CD14-positive monocyte (primary cell): ENCODE measurements at regions of chr11 and their contacts with region 1.

Region 1: GRCh38 chr11:2480874-2481220 is 36.0 kb downstream of the KCNQ1 start:
- DNase-seq: peak; percentile 85 to 95 (median 87)
- H3K4me3 ChIP-seq: peak overlapping the region; percentile 2 to 71 (median 34)
- H3K4me3 Mint-ChIP-seq: peak overlapping the region; percentile 11 to 80
- H3K27ac ChIP-seq: peak overlapping the region; percentile 88 to 94
- H3K27ac Mint-ChIP-seq: peak overlapping the region; percentile 90 to 99 (median 98)
- H3K4me1 ChIP-seq: peaks cover 44 to 46% of the 10 kb centered on the region in 2 donors
- H3K4me1 Mint-ChIP-seq: peaks cover 56% of the 10 kb centered on the region
- H3K27me3 ChIP-seq: no peaks in the 10 kb centered on the region
- H3K27me3 Mint-ChIP-seq: peaks cover 0 to 6% (median 5%) of the 10 kb centered on the region in 3 donors
- CTCF ChIP-seq: no peak

Region 2: GRCh38 chr11:2444821-2445745 is 35.8 kb before region 1 on chr11 and contains the start of gene KCNQ1:
- intact Hi-C with region 1: loop called in 1 of 2 experiments (anchors 5 kb)
- DNase-seq: peak; percentile 49 to 73 (median 60)
- H3K4me3 ChIP-seq: peak within 1 kb of the TSS; percentile 74 to 88 (median 82)
- H3K4me3 Mint-ChIP-seq: peak within 1 kb of the TSS; percentile 93 to 98
- H3K27ac ChIP-seq: peak within 1 kb of the TSS; percentile 80 to 88
- H3K27ac Mint-ChIP-seq: peak within 1 kb of the TSS; percentile 74 to 89 (median 86)
- H3K4me1 ChIP-seq: peaks cover 49 to 57% of the 10 kb centered on the region in 2 donors
- H3K4me1 Mint-ChIP-seq: peaks cover 43% of the 10 kb centered on the region
- H3K27me3 ChIP-seq: peaks cover 0 to 19% of the 10 kb centered on the region in 2 donors
- H3K27me3 Mint-ChIP-seq: peaks cover 13 to 25% (median 16%) of the 10 kb centered on the region in 3 donors
- CTCF ChIP-seq: no peak
- polyA plus RNA-seq, gene KCNQ1: 14.9 to 31.8 (median 21.6) TPM

Region 3: DNA sequence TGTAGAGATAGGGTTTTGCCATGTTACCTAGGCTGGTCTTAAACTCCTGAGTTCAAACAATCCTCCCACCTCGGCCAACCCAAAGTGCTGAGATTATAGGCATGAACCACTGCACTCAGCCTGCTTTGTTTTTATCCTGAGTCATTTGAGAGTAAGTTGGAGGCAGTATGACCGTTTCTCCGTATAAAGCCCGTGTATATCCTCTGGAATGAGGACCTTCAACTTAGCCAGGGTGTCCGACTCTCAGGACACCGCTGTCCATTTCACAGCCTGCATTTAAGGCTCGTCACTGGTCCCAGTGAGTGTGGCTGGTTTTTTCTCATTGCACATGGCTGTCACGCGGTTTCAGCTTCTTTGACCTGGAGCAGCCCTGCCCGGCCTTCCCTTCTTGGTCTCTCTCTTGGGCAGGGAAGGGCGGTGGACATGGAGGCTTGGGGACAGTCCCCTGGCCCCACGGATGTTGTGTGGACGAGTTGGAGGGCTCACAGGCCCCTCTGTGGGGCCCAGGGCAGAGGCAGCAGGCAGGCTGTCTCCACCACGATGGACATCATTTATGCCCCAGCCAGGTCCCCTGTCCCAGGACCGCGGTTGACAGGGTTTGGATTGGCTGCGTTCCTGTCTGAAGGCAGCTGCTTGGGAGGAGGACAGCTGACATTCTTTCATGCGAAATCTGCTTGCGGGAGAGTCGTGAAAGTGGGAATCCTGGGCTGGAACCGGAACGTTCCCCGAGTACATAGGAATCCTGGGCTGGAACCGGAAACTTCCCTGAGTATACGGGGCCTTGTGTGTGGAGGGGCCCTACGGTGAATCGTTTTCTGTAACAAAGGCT is 57.3 kb after region 1 on chr11:
- intact Hi-C with region 1: no loop called
- DNase-seq: no peak
- H3K4me3 ChIP-seq: no peak overlapping the region
- H3K4me3 Mint-ChIP-seq: no peak overlapping the region
- H3K27ac ChIP-seq: no peak overlapping the region
- H3K27ac Mint-ChIP-seq: no peak overlapping the region
- H3K4me1 ChIP-seq: peaks cover 23 to 30% of the 10 kb centered on the region in 2 donors
- H3K4me1 Mint-ChIP-seq: peaks cover 24% of the 10 kb centered on the region
- H3K27me3 ChIP-seq: no peaks in the 10 kb centered on the region
- H3K27me3 Mint-ChIP-seq: peaks cover 5 to 13% (median 7%) of the 10 kb centered on the region in 3 donors
- CTCF ChIP-seq: no peak

Region 4: GRCh38 chr11:2586087-2586792 is 105.4 kb after region 1 on chr11:
- intact Hi-C with region 1: no loop called
- DNase-seq: peak in 1 of 3 donors; percentile 1
- H3K4me3 ChIP-seq: no peak overlapping the region
- H3K4me3 Mint-ChIP-seq: no peak overlapping the region
- H3K27ac ChIP-seq: no peak overlapping the region
- H3K27ac Mint-ChIP-seq: no peak overlapping the region
- H3K4me1 ChIP-seq: no peaks in the 10 kb centered on the region
- H3K4me1 Mint-ChIP-seq: no peaks in the 10 kb centered on the region
- H3K27me3 ChIP-seq: no peaks in the 10 kb centered on the region
- H3K27me3 Mint-ChIP-seq: peaks cover 0 to 1% (median 0%) of the 10 kb centered on the region in 3 donors
- CTCF ChIP-seq: no peak